Activated B cell treated with CpG ODN at 0.5 μM for 24 hours (primary cell): ENCODE measurements at regions of chr17 and their contacts with region 1.

Region 1: DNA sequence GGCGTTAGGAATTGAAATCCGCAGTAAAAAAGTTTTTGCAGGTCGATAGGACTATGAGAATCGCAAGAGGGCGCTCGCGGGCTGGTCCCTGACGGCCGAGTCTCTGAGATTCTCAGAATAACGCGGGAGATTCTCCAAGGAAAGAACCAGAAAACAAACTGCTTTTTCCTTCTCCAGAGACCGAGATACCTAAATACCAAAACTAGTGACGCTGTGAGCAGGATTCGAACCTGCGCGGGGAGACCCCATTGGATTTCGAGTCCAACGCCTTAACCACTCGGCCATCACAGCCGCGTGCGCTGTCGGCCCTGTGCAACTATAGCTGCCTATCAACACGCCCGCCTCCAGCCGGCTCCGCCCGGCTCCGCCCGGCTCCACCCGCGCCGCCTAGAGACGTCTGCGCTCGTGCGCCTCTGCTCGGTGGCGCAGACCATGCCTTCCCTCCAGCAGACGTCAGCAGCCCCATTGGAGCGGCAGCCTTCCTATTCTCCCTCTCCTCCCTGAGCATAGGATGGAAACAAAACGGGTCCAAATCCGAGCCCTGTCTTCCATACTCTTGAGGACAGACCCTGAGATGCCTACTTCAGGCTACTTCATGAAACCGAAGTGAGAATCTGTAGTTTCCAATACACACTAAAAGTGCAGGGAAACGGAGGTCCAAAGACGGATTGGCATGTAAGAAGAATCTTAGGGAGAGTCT is 13.4 kb downstream of the PER1 start:
- DNase-seq: peak; percentile 94
- ATAC-seq: peak; percentile 94
- H3K4me3 Mint-ChIP-seq: no peak overlapping the region
- H3K27ac Mint-ChIP-seq: no peak overlapping the region
- H3K4me1 Mint-ChIP-seq: no peaks in the 10 kb centered on the region
- H3K27me3 Mint-ChIP-seq: no peaks in the 10 kb centered on the region
- CTCF ChIP-seq: peak; percentile 93

Region 2: DNA sequence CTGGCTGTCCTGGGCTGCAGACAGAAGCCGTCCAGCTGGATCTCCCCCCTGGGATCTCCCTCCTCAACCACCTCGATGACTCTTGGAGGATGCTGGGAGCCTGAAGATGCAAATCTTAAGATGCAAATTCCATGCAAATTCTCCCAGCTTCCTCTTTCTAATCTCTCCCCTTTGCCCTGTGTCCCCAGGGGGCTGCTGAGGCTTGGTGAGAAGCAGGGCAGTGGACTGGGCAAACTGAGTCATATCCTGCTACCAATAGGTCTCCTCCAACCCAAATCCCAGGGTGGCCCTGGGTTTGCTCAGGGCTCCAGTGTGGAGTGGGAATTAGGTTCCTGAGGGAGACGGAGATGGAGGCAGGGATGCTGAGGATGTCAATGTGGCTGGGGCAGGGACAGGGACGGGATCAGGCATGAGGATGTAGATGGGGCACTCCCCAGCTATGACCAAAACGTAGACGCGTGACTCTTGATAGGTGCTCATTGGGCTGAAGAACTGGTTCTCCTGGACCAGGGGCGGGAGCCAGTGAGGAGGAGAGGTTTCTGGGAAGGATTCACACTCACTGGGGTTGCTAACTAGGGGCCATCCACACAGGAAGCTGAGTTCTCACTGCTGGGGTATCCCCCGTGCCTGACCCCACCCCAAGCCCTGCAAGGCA is 47.7 kb before region 1 on chr17:
- CTCF ChIA-PET with region 1: interaction called, 3 read pairs
- POLR2A ChIA-PET with region 1: interaction called, 10 read pairs
- intact Hi-C with region 1: loop called (anchors 1 kb)
- DNase-seq: peak; percentile 71
- ATAC-seq: peak; percentile 90
- H3K4me3 Mint-ChIP-seq: peak overlapping the region; percentile 80
- H3K27ac Mint-ChIP-seq: peak overlapping the region; percentile 95
- H3K4me1 Mint-ChIP-seq: peaks cover 46% of the 10 kb centered on the region
- H3K27me3 Mint-ChIP-seq: peaks cover 7% of the 10 kb centered on the region
- CTCF ChIP-seq: no peak

Region 3: DNA sequence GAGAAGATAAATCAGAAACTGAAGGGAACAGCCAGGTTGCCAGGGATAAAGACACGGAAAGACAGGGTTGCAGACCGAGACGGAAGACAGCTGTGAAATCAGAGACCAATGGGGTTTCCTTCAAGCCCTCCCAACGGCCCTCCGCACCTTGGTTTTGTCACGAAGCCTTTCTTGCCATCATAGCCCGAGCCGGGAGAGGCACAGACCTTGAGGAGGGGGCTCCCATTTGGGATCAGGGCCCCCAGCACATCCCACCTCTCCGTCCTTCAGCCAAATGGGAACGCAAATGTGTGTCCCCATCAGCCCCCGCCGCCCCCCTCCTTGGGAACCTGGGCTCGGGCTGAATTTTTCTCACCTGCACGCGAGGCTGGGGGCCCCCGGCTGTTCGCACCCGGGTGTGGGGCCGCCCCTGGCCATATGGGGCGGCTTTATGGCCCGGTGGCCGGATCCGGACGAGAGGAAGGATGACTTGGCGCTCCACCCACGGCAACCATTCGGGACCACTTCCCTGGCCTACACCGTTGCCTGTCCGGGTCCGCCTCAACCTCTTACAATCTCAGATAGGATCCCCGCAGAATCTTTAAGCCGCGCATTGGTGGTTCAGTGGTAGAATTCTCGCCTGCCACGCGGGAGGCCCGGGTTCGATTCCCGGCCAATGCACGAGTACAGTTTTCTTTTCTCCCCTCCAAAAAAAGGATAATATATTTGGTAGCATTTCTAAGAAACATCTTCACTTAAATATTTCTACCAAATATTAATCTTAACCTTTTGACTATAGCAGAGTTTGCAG is 13.5 kb before region 1 on chr17:
- CTCF ChIA-PET with region 1: interaction called, 19 read pairs
- POLR2A ChIA-PET with region 1: interaction called, 46 read pairs
- intact Hi-C with region 1: loop called (anchors 1 kb)
- DNase-seq: peak; percentile 85
- ATAC-seq: peak; percentile 46
- H3K4me3 Mint-ChIP-seq: peak overlapping the region; percentile 93
- H3K27ac Mint-ChIP-seq: peak overlapping the region; percentile 94
- H3K4me1 Mint-ChIP-seq: peaks cover 58% of the 10 kb centered on the region
- H3K27me3 Mint-ChIP-seq: peaks cover 35% of the 10 kb centered on the region
- CTCF ChIP-seq: no peak

Region 4: DNA sequence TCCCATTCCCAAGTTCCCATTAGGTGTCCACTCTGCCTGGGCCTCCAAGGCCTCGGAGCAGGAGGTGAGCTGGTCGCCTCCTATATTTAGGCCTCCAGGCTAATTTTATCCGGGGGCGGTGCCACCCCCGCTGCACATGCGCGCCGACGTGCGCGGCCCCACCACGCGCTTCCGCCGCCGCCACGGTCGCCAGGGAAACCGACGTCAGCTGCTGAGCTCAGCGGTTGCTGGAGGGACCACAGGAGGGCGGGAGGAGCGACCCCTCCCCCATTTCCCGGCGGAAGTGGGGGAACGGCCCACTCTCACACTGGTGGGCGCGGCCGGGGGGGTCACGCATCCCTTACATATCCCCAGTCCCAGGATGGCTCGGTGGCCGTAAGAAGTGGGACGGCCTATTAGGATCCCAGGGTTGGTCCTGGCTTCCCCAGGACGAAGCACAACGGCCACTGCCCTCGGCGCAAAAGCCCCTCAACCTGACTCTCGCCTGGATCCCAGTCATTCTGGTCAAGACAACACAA is 12.4 kb after region 1 on chr17:
- CTCF ChIA-PET with region 1: interaction called, 9 read pairs
- POLR2A ChIA-PET with region 1: interaction called, 139 read pairs
- intact Hi-C with region 1: loop called (anchors 1 kb)
- DNase-seq: peak; percentile 89
- ATAC-seq: peak; percentile 60
- H3K4me3 Mint-ChIP-seq: peak overlapping the region; percentile 90
- H3K27ac Mint-ChIP-seq: peak overlapping the region; percentile 87
- H3K4me1 Mint-ChIP-seq: peaks cover 31% of the 10 kb centered on the region
- H3K27me3 Mint-ChIP-seq: no peaks in the 10 kb centered on the region
- CTCF ChIP-seq: no peak

Region 5: DNA sequence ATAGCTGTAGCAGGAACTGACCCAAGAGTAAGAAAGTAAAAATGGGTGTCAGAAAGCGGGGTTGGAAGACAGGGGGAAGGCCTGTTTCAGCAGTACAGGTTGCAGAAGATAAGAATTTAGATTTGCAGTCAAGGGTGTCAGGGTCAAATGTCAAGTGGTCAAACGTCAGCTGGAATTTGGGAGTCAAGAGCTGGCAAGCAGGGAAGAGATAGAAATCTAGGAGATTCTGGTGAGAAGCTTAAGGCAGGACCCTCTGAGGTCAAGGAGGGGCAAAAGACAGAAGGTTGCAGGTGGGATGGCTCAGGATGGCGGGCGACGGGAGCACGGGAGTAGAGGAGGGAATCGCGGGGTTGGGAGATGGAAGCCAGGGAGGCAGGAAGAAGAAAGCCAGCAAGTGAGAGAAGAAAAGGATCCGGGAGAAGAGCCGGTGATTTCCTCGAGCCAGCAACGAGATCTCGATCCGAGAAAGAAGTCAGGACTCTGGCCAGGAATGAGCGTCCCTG is 156.0 kb after region 1 on chr17:
- CTCF ChIA-PET with region 1: interaction called, 5 read pairs
- POLR2A ChIA-PET with region 1: interaction called, 4 read pairs
- intact Hi-C with region 1: loop called (anchors 1 kb)
- DNase-seq: no peak
- ATAC-seq: no peak
- H3K4me3 Mint-ChIP-seq: peak overlapping the region; percentile 92
- H3K27ac Mint-ChIP-seq: peak overlapping the region; percentile 86
- H3K4me1 Mint-ChIP-seq: peaks cover 30% of the 10 kb centered on the region
- H3K27me3 Mint-ChIP-seq: no peaks in the 10 kb centered on the region
- CTCF ChIP-seq: no peak

Region 6: DNA sequence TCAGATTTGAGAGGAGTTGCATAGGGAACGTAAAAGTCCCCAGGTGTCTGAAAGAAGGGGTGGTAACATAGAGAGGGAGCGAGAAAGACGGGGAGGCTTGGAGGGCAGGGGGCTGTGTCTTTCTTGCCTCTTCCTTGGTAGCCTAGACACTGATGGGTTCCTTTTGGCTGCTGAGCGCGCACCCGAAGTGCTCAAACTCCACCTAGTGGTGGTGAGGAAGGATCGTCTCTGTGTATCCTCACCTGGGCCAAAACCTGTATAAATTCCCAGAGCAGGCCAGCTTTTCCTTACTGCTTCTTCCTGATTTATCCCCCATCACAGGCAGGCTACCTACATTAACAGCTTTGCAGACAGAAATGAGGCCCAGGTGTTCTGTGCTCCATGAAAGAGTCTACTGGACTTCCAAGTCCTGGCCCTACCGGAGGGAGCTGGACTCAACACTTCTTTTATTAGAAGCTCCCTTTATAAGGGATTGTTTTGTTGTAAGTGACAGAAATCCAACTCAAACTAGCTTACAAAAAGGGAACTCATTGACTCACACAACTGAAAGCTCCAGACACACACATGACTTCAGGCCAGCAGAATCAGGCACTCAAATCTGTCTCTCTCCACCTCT is 161.9 kb after region 1 on chr17:
- CTCF ChIA-PET with region 1: interaction called, 5 read pairs
- POLR2A ChIA-PET with region 1: interaction called, 4 read pairs
- intact Hi-C with region 1: loop called (anchors 1 kb)
- DNase-seq: peak; percentile 30
- ATAC-seq: peak; percentile 97
- H3K4me3 Mint-ChIP-seq: no peak overlapping the region
- H3K27ac Mint-ChIP-seq: peak overlapping the region; percentile 46
- H3K4me1 Mint-ChIP-seq: peaks cover 8% of the 10 kb centered on the region
- H3K27me3 Mint-ChIP-seq: no peaks in the 10 kb centered on the region
- CTCF ChIP-seq: no peak